ENCODE measurements at regions of chr5 and their contacts with region 1.

Region 1: GRCh38 chr5:42994246-42995151 is 45.6 kb downstream of the ANXA2R start:
- DNase-seq: peak; percentile 87 to 94
- H3K4me3 ChIP-seq: peak overlapping the region; percentile 61 to 77
- H3K27ac ChIP-seq: peak overlapping the region; percentile 92 to 97
- H3K4me1 ChIP-seq: peaks cover 0 to 5% (median 2%) of the 10 kb centered on the region in 4 donors
- H3K27me3 ChIP-seq: no peaks in the 10 kb centered on the region
- CTCF ChIP-seq: peak; percentile 87 to 96

Region 2: GRCh38 chr5:42950440-42951292 is 43.8 kb before region 1 on chr5:
- intact Hi-C with region 1: loop called (anchors 5 kb)
- DNase-seq: peak; percentile 81 to 90
- H3K4me3 ChIP-seq: peak overlapping the region; percentile 56 to 60
- H3K27ac ChIP-seq: peak overlapping the region; percentile 78 to 92
- H3K4me1 ChIP-seq: peaks cover 0 to 36% (median 13%) of the 10 kb centered on the region in 4 donors
- H3K27me3 ChIP-seq: peaks cover 0 to 3% of the 10 kb centered on the region in 2 donors
- CTCF ChIP-seq: peak in 1 of 2 experiments; percentile 16

Region 3: DNA sequence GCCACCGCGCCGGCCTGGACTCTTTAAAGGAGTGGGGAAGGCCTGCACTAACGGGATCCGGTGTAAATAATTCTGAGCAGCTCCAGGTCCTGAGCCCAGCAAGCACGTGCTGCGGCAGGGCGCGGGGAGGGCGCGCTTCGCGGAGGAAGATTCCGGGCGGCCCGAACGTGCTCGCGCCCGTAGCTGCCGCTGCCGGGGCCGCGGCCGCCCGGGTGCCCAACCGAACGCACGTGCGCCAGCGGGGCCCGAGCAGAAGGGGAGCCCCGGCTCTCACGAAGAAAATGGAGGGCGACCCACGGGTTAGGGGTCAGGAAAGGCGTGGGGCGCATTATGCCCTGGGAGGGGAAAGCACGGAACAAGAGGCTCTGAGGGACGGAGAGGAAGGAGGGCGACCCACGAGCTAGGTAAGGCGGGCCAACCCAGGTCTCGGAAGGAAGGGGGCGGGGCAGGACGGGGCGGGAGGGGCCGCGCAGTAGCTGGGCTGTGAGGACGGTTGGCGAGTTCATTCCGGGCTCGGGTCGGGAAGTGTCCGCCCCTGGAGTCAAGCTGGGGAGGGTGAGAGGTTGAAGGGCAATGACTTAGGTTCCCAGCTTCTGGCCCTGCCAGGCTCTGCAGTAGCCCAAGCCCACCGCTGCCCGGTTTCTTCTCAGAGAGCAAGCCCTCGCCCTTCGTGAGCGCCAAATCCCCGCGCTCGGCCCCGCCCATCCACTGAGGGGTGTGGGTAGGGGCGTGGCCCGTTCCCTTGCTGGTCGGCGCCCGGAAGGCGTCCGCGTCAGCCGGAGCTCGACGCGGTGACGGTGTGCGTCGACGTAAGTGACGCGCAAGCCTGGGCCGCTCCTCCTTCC is 126.4 kb after region 1 on chr5 and contains the start of gene ZNF131:
- intact Hi-C with region 1: loop called (anchors 5 kb)
- DNase-seq: peak; percentile 95 to 98
- H3K4me3 ChIP-seq: peak within 1 kb of the TSS; percentile 65 to 72
- H3K27ac ChIP-seq: peak within 1 kb of the TSS; percentile 90 to 93
- H3K4me1 ChIP-seq: peaks cover 0 to 43% (median 25%) of the 10 kb centered on the region in 4 donors
- H3K27me3 ChIP-seq: no peaks in the 10 kb centered on the region
- CTCF ChIP-seq: no peak

Measured in tibial artery (tissue), 4 donors.